WTC11 (cell line): ENCODE measurements at regions of chr1 and their contacts with region 1.

Region 1: GRCh38 chr1:162145280-162145965 is 75.9 kb downstream of the NOS1AP start:
- DNase-seq: no peak
- ATAC-seq: peak; percentile 44
- H3K4me3 Mint-ChIP-seq: no peak overlapping the region
- H3K27ac Mint-ChIP-seq: no peak overlapping the region
- H3K4me1 Mint-ChIP-seq: peaks cover 39% of the 10 kb centered on the region
- H3K27me3 Mint-ChIP-seq: peaks cover 5% of the 10 kb centered on the region
- CTCF ChIP-seq: no peak

Region 2: DNA sequence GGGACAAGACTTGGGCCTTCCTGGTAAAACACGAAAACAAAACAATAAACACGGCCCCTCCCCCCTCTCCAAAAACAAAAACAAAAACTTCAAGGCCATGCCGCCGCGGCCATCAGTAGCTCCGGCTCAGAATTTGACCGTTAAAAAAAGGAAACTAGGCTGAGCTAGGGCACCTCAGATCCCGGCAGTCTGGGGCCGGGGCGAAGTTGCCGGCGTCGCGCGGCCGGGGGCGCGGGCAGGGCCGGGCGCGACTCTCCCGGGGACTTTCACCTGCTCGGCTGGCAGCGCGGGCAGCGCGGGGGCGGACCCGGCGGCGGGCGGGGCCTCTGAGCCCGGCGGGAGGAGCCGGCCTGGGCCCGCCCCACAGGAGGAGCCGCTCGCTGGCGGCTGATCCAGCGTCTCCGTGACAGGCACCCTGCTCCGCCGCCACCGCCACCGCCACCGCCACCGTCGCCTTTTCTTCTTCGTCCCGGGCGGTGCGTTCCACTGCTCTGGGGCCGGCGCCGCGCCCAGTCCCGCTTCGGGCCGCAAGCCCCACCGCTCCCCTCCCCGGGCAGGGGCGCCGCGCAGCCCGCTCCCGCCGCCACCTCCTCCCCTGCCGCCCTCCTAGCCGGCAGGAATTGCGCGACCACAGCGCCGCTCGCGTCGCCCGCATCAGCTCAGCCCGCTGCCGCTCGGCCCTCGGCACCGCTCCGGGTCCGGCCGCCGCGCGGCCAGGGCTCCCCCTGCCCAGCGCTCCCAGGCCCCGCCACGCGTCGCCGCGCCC is 75.9 kb before region 1 on chr1 and contains the start of gene NOS1AP:
- CTCF ChIA-PET with region 1: interaction called, 3 read pairs
- POLR2A ChIA-PET with region 1: interaction called, 22 read pairs
- DNase-seq: peak; percentile 86
- ATAC-seq: peak; percentile 87
- H3K4me3 Mint-ChIP-seq: peak within 1 kb of the TSS; percentile 71
- H3K27ac Mint-ChIP-seq: peak within 1 kb of the TSS; percentile 49
- H3K4me1 Mint-ChIP-seq: peaks cover 47% of the 10 kb centered on the region
- H3K27me3 Mint-ChIP-seq: no peaks in the 10 kb centered on the region; the same call in none of the 2 replicates
- CTCF ChIP-seq: no peak
- total RNA-seq, gene NOS1AP: 10.0 to 14.7 TPM (median 10.2 TPM) in 3 replicates

Region 3: GRCh38 chr1:162197615-162198421 is 52.4 kb after region 1 on chr1:
- CTCF ChIA-PET with region 1: no interaction called
- POLR2A ChIA-PET with region 1: no interaction called
- DNase-seq: peak; percentile 31
- ATAC-seq: peak; percentile 77
- H3K4me3 Mint-ChIP-seq: peak overlapping the region; percentile 20; the same call in 1 of the 2 replicates
- H3K27ac Mint-ChIP-seq: peak overlapping the region; percentile 23; the same call in 1 of the 2 replicates
- H3K4me1 Mint-ChIP-seq: peaks cover 40% of the 10 kb centered on the region
- H3K27me3 Mint-ChIP-seq: no peaks in the 10 kb centered on the region
- CTCF ChIP-seq: no peak